ENCODE measurements at regions of chr5 and their contacts with region 1.

Region 1: GRCh38 chr5:65102828-65103711 is 334.3 kb downstream of the CWC27 start:
- DNase-seq: peak; percentile 12 to 82 (median 37)
- ATAC-seq: peak; percentile 72
- H3K4me3 ChIP-seq: peak overlapping the region; percentile 65
- H3K4me3 Mint-ChIP-seq: peak overlapping the region; percentile 89
- H3K27ac ChIP-seq: peak overlapping the region; percentile 29 to 50
- H3K27ac Mint-ChIP-seq: peak overlapping the region; percentile 80
- H3K4me1 ChIP-seq: peaks cover 15% of the 10 kb centered on the region
- H3K4me1 Mint-ChIP-seq: peaks cover 44% of the 10 kb centered on the region
- H3K27me3 ChIP-seq: no peaks in the 10 kb centered on the region
- H3K27me3 Mint-ChIP-seq: no peaks in the 10 kb centered on the region
- CTCF ChIP-seq: peak; percentile 17

Region 2: DNA sequence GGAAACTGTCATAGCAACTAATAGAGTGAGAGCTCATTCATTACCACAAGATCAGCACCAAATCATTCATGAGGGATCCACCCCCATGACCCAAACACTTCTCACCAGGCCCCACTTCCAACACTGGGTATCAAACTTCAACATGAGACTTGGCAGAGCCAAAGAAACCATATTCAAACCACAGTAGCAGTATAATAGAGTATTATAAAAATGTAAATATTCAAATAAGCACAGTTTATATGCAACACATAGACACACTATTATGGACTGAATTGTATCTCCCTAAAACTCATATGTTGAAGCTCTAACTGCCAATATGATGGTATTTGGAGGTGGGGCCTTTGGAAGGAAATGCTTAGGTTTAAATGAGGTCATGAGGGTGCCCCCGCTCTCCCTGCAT is 93.9 kb before region 1 on chr5:
- CTCF ChIA-PET with region 1: no interaction called
- POLR2A ChIA-PET with region 1: no interaction called
- intact Hi-C with region 1: no loop called
- DNase-seq: no peak
- ATAC-seq: no peak
- H3K4me3 ChIP-seq: no peak overlapping the region
- H3K4me3 Mint-ChIP-seq: no peak overlapping the region
- H3K27ac ChIP-seq: no peak overlapping the region
- H3K27ac Mint-ChIP-seq: no peak overlapping the region
- H3K4me1 ChIP-seq: no peaks in the 10 kb centered on the region
- H3K4me1 Mint-ChIP-seq: no peaks in the 10 kb centered on the region
- H3K27me3 ChIP-seq: no peaks in the 10 kb centered on the region
- H3K27me3 Mint-ChIP-seq: no peaks in the 10 kb centered on the region
- CTCF ChIP-seq: no peak

Region 3: GRCh38 chr5:65035211-65036206 is 67.6 kb before region 1 on chr5:
- CTCF ChIA-PET with region 1: interaction called, 5 read pairs
- POLR2A ChIA-PET with region 1: interaction called, 11 read pairs
- intact Hi-C with region 1: loop called (anchors 2 to 5 kb)
- DNase-seq: peak; percentile 49 to 94 (median 72)
- ATAC-seq: peak; percentile 77
- H3K4me3 ChIP-seq: peak overlapping the region; percentile 71
- H3K4me3 Mint-ChIP-seq: peak overlapping the region; percentile 83
- H3K27ac ChIP-seq: peak overlapping the region; percentile 86 to 91
- H3K27ac Mint-ChIP-seq: peak overlapping the region; percentile 83
- H3K4me1 ChIP-seq: peaks cover 30% of the 10 kb centered on the region
- H3K4me1 Mint-ChIP-seq: peaks cover 22% of the 10 kb centered on the region
- H3K27me3 ChIP-seq: no peaks in the 10 kb centered on the region
- H3K27me3 Mint-ChIP-seq: no peaks in the 10 kb centered on the region
- CTCF ChIP-seq: no peak

Measured in CD4-positive, alpha-beta T cell (primary cell).